ENCODE measurements at regions of chr11 and their contacts with region 1.

Region 1: GRCh38 chr11:72609045-72609444 is 65.2 kb downstream of the PDE2A start:
- H3K4me3 ChIP-seq: no peak overlapping the region
- H3K27ac ChIP-seq: no peak overlapping the region
- H3K4me1 ChIP-seq: no peaks in the 10 kb centered on the region
- CTCF ChIP-seq: no peak

Region 2: DNA sequence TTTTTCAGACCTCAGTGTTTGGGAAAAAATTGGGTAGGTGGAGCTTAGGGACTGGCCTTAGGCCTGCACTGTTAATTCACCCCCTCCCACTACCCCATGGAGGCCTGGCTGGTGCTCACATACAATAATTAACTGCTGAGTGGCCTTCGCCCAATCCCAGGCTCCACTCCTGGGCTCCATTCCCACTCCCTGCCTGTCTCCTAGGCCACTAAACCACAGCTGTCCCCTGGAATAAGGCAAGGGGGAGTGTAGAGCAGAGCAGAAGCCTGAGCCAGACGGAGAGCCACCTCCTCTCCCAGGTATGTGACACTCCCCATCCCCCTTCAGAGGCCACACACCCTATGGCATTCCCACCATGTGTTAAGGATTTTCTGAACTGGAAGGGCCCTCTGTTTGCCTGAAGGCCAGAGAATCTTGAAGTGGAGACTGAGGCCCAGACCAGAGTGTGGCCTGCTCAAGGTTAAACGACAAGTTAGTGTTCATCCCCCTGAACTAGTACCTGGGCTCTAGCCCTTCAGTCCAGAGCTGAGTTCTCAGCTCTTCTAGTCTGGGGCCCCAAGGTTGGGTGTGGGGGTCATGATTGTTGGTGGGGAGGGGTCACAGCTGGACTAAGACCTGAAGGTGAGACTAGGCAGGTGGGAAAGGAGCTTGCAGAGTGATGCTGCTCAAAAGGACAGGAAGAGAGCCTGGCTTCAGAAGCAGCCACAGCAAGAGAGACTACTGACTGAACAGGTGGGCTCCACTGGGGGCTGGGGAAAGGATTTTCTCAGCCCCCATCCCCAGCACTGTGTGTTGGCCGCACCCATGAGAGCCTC is 419.4 kb before region 1 on chr11:
- CTCF ChIA-PET with region 1: no interaction called
- POLR2A ChIA-PET with region 1: no interaction called
- H3K4me3 ChIP-seq: no peak overlapping the region
- H3K27ac ChIP-seq: no peak overlapping the region
- H3K4me1 ChIP-seq: no peaks in the 10 kb centered on the region
- CTCF ChIP-seq: no peak

Region 3: DNA sequence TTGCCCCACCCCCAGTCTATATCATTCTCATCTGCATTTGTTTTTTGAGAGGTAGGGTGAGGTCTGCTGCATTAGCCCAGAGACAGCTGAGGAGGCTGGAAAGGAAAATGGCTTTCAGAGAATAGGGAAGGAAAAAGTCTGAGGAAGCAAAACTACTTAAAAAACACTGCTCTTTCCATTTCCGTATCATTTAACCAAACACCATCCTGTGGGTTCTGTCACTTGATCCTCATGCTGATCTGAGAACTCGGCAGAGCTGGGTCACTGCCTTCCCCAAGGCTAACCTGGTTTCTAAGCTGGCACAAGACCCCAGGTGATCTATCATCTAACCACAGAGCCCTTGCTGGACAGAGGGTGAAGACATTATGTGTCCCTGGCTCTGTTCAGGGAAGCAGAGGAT is 391.2 kb before region 1 on chr11:
- CTCF ChIA-PET with region 1: no interaction called
- POLR2A ChIA-PET with region 1: no interaction called
- H3K4me3 ChIP-seq: no peak overlapping the region
- H3K27ac ChIP-seq: no peak overlapping the region
- H3K4me1 ChIP-seq: peaks cover 3% of the 10 kb centered on the region; the same call in 1 of the 2 replicates
- CTCF ChIP-seq: no peak

Region 4: DNA sequence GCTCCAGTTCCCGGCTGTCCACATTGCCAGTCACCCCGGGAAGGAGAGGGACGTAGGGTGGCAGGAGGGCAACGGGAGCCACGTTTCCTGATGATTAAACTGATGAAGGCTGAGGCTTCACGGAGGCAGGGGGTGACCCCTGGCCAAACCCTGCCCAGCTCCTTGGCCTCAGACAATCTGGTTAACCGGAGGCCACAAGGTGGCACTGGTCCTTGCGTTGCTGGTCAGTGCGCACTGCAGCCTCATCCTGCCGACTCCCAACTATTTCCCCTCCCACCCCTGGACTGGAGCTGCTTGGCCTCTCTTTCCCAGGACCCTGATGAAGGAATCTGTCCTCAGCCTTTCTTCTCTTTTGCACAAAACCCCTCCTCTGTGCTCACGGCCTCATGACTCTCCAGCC is 10.1 kb before region 1 on chr11:
- CTCF ChIA-PET with region 1: interaction called, 16 read pairs
- POLR2A ChIA-PET with region 1: no interaction called
- H3K4me3 ChIP-seq: no peak overlapping the region
- H3K27ac ChIP-seq: no peak overlapping the region
- H3K4me1 ChIP-seq: no peaks in the 10 kb centered on the region
- CTCF ChIP-seq: no peak